ENCODE measurements at regions of chr15 and their contacts with region 1.

Region 1: DNA sequence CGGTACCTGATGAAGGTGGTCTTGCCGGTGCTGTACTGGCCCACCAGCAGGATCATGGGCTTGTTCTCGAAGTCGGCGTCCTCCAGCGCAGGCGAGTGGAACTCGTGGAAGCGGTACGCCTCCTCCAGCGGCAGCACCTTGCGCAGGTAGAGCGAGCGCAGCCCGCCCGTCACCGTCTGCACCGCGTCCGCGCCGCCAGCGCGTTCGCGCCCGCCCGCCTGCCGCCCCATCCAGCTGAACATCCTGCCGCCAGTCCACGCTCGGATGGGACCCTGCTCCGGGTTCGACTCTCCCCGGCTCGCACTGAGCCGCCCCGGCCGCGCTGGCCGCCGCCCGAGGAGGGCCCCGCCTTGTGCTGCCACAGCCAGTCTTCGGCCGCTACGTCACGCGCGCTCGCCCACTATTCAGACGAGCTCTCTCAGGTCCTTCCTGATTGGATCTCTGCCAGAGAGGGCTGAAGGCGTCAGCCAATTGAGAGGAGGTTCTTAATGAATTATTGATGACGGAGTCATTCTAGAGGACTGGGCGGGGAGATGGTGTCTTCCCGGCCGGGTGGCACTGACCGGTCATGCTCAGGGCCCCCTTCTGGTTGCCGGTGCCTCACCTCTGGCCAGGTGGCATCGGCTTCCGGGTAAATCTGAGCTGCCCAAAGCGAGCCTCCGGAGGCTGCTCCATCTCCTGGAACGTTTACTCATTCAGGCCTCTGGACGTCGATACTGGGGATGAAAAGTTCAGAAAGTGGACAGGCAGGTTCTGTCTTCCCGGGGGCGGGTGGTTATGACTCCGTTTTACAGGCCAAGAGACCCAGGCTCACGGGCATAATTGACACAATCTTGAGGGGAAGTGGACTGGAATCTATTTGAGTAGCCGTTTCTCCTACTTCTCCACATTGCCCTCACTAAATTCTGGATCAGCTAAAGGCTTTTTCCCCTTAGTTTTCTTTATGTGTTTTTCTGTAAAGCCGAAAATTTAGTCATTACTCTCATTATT is at the start of gene EHD4:
- DNase-seq: peak; percentile 92
- ATAC-seq: peak; percentile 78
- H3K4me3 ChIP-seq: peak within 1 kb of the TSS; percentile 93
- H3K27ac ChIP-seq: peak within 1 kb of the TSS; percentile 100
- H3K4me1 ChIP-seq: peaks cover 24% of the 10 kb centered on the region
- H3K27me3 ChIP-seq: no peaks in the 10 kb centered on the region
- CTCF ChIP-seq: peak in 2 of 3 experiments; percentile 34 to 38; a peak in 3 of 6 replicates
- EP300 ChIP-seq: 0 out of 4 replicates have a peak, but pooled peaks of 1 of the 2 experiments have one; percentile 11
- POLR2A ChIP-seq: peak; percentile 96
- RAD21 ChIP-seq: no peak; the same call in 1 of the 2 replicates
- polyA plus RNA-seq, gene EHD4: 4.2 to 8.6 TPM

Region 2: GRCh38 chr15:41827880-41828806 is 144.4 kb before region 1 on chr15 and contains the start of gene JMJD7:
- CTCF ChIA-PET with region 1: no interaction called
- POLR2A ChIA-PET with region 1: no interaction called
- RAD21 ChIA-PET with region 1: no interaction called
- SMC1A ChIA-PET with region 1: interaction called, 3 read pairs
- in situ Hi-C with region 1: no loop called
- intact Hi-C with region 1: loop called (anchors 5 kb)
- DNase-seq: peak; percentile 44
- ATAC-seq: peak; percentile 96
- H3K4me3 ChIP-seq: peak within 1 kb of the TSS; percentile 85
- H3K27ac ChIP-seq: 0 out of 2 replicates have a peak within 1 kb of the TSS, but pooled peaks have one; percentile 10
- H3K4me1 ChIP-seq: no peaks in the 10 kb centered on the region
- H3K27me3 ChIP-seq: no peaks in the 10 kb centered on the region
- CTCF ChIP-seq: no peak
- EP300 ChIP-seq: no peak
- POLR2A ChIP-seq: peak; percentile 84
- RAD21 ChIP-seq: no peak
- polyA plus RNA-seq, gene JMJD7: 0.79 to 2.2 TPM

Region 3: GRCh38 chr15:41930221-41930866 is 42.2 kb before region 1 on chr15:
- CTCF ChIA-PET with region 1: interaction called, 27 read pairs
- POLR2A ChIA-PET with region 1: interaction called, 44 read pairs
- RAD21 ChIA-PET with region 1: interaction called, 97 read pairs
- SMC1A ChIA-PET with region 1: interaction called, 179 read pairs
- in situ Hi-C with region 1: no loop called
- intact Hi-C with region 1: loop called (anchors 1 kb)
- DNase-seq: peak; percentile 17
- ATAC-seq: peak; percentile 9
- H3K4me3 ChIP-seq: peak overlapping the region; percentile 26; the same call in 1 of the 2 replicates
- H3K27ac ChIP-seq: peak overlapping the region; percentile 77
- H3K4me1 ChIP-seq: peaks cover 65% of the 10 kb centered on the region
- H3K27me3 ChIP-seq: no peaks in the 10 kb centered on the region
- CTCF ChIP-seq: peak; percentile 17 to 44 (median 17); a peak in 4 of 6 replicates
- EP300 ChIP-seq: no peak
- POLR2A ChIP-seq: no peak
- RAD21 ChIP-seq: no peak

Region 4: GRCh38 chr15:41936649-41937567 is 35.6 kb before region 1 on chr15:
- CTCF ChIA-PET with region 1: interaction called, 8 read pairs
- POLR2A ChIA-PET with region 1: interaction called, 42 read pairs
- RAD21 ChIA-PET with region 1: interaction called, 97 read pairs
- SMC1A ChIA-PET with region 1: interaction called, 179 read pairs
- in situ Hi-C with region 1: no loop called
- intact Hi-C with region 1: loop called (anchors 2 kb)
- DNase-seq: no peak
- ATAC-seq: peak; percentile 10; the same call in 1 of the 3 replicates
- H3K4me3 ChIP-seq: no peak overlapping the region
- H3K27ac ChIP-seq: peak overlapping the region; percentile 45
- H3K4me1 ChIP-seq: peaks cover 34% of the 10 kb centered on the region
- H3K27me3 ChIP-seq: no peaks in the 10 kb centered on the region
- CTCF ChIP-seq: peak; percentile 6 to 31 (median 29); a peak in 4 of 6 replicates
- EP300 ChIP-seq: no peak
- POLR2A ChIP-seq: peak; percentile 48; the same call in 1 of the 2 replicates
- RAD21 ChIP-seq: peak; percentile 30

Region 5: DNA sequence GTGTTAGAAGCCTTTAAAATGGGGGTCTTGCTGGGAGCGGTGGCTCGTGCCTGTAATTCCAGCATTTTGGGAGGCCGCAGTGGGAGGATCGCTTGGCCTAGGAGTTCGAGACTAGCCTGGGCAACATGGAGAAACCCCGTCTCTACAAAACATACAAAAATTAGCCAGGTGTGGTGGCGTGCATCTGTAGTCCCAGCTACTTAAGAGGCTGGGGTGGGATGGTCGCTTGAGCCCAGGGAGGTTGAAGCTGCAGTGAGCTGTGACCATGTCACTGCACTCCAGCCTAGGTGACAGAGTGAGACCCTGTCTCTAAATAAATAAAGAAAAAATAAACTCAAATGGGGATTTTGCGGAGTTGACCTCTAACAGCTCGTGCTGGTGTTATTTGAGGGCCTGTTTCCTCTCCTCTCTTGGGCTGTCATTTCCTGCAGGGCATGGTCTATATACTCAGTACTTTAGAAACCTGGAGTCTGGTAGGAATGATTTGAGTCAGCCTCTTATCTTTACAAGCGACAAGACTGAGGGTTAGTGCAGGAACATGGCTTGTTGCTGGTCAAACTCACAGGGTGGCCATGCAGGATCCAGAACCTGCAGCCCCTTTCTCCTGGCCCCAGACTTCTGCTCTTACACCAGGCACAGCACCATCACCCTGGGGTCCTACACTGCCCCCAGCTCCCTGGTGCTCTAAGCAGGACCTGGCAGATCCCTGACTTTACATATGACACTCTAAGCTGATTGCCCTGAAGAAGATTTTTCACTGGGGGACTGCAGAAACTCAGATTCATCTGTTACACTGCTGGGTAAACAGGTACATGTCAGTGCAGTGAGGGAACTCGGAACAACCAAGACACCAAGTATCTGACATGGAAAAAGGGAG is 15.3 kb before region 1 on chr15:
- CTCF ChIA-PET with region 1: interaction called, 13 read pairs
- POLR2A ChIA-PET with region 1: interaction called, 67 read pairs
- RAD21 ChIA-PET with region 1: interaction called, 10 read pairs
- SMC1A ChIA-PET with region 1: interaction called, 59 read pairs
- in situ Hi-C with region 1: no loop called
- intact Hi-C with region 1: no loop called
- DNase-seq: peak; percentile 64
- ATAC-seq: peak; percentile 93
- H3K4me3 ChIP-seq: peak overlapping the region; percentile 20; the same call in 1 of the 2 replicates
- H3K27ac ChIP-seq: peak overlapping the region; percentile 75
- H3K4me1 ChIP-seq: peaks cover 24% of the 10 kb centered on the region
- H3K27me3 ChIP-seq: no peaks in the 10 kb centered on the region
- CTCF ChIP-seq: no peak
- EP300 ChIP-seq: no peak
- POLR2A ChIP-seq: no peak
- RAD21 ChIP-seq: no peak

Measured in GM12878 (cell line).